Heart left ventricle (tissue), 16 donors: ENCODE measurements at regions of chr6 and their contacts with region 1.

Region 1: DNA sequence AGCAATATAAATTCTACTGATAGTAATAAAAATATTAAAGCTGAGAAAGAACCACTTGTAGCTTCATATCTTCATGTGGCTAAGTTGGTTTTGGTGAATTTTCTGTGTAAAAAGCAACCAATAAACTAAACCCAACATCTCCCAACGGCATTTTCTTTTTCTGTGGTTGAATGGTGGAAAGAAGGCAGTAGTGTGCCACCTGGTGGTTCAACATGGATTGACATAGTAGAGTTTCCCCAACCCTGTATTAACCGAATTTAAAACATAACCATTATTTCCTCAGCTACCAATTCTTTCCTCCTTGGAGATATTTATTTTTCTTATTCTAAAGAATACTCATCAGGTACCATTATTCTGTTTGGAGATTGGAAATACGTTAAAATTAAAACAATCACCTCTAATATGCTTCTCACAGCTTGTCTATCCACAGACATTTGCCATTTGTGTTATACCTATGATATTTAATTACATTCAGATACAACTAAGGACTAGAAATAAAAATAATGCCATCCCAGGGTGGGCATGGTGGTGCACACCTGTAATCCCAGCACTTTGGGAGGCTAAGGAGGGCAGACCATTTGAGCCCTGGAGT is 117.1 kb upstream of the EEF1E1 start:
- DNase-seq: peak in 1 of 5 donors; percentile 14
- ATAC-seq: no peak
- H3K4me3 ChIP-seq: no peak overlapping the region
- H3K27ac ChIP-seq: no peak overlapping the region
- H3K4me1 ChIP-seq: no peaks in the 10 kb centered on the region
- H3K27me3 ChIP-seq: peaks cover 0 to 4% (median 0%) of the 10 kb centered on the region in 9 donors
- CTCF ChIP-seq: peak; percentile 56 to 85 (median 74)
- POLR2A ChIP-seq: no peak

Region 2: DNA sequence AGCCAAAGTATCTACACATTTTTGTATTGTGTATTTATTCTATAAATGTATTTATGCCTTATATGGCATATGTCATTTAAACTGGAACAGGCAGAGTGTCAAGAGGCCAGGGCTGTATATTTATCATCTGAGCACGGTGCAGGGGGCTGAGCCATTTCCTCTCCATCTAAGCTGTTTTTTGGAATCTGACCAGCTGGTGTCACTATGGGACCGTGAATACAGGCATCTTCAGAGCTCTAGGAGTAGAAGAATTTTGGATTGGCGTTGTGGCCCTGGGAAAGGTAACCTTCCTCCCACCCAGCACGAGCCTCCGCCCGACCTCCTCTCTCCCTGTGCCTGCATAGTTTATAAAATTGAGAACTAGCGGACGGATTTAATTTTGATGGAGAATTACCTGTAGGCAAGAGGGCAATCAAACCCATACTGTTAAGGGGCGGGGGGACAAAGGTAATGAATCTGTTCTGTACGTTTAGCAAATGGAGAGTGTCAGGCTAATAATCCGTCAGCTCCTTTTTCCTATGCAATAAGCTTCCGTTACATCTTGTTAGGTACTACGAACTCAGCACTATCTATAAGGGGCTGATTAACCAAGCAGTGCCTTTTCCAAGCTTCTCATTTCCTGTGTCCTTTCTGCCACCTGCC is 88.1 kb before region 1 on chr6:
- intact Hi-C with region 1: loop called (anchors 1 to 2 kb)
- DNase-seq: peak in 2 of 5 donors; percentile 15 to 22
- ATAC-seq: peak in 3 of 4 donors; percentile 70 to 74 (median 74)
- H3K4me3 ChIP-seq: no peak overlapping the region
- H3K27ac ChIP-seq: no peak overlapping the region
- H3K4me1 ChIP-seq: no peaks in the 10 kb centered on the region
- H3K27me3 ChIP-seq: peaks cover 0 to 19% (median 2%) of the 10 kb centered on the region in 9 donors
- CTCF ChIP-seq: peak; percentile 11 to 64 (median 47)
- POLR2A ChIP-seq: no peak